AG04450 (cell line): ENCODE measurements at regions of chr6 and their contacts with region 1.

Region 1: DNA sequence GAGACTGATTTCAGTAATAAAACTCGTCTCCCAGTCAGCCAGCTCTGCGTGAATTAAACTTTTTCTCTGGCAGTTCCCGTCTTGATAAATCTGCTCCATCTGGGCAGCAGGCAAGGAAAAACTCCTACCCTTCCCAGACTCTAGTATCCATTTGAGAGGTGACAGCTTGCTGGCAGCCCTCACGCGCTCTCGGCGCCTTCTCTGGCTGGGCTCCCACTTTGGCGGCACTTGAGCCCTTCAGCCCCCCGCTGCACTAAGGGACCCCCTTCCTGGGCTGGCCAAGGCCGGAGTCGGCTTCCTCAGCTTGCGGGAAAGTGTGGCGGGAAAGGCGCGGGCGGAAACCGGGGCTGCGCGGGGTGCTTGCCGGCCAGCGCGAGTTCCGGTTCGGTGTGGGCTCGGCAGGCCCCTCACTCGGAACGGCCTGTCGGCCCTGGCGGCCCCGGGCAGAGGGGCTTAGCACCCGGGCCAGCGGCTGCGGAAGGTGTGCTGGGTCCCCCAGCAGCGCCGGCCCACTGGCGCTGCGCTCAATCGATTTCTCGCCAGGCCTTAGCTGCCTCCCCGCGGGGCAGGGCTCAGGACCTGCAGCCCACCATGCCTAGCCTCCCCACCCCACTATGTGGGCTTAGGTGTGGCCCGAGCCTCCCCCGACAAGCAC is 21.8 kb upstream of the GMPR start:
- DNase-seq: no peak
- H3K4me3 ChIP-seq: no peak overlapping the region
- H3K27ac ChIP-seq: no peak overlapping the region
- H3K27me3 ChIP-seq: no peaks in the 10 kb centered on the region
- CTCF ChIP-seq: no peak

Region 2: GRCh38 chr6:16236631-16237199 is 20.1 kb after region 1 on chr6:
- CTCF ChIA-PET with region 1: interaction called, 3 read pairs
- POLR2A ChIA-PET with region 1: interaction called, 10 read pairs
- DNase-seq: peak; percentile 21
- H3K4me3 ChIP-seq: peak overlapping the region; percentile 23
- H3K27ac ChIP-seq: no peak overlapping the region
- H3K27me3 ChIP-seq: no peaks in the 10 kb centered on the region
- CTCF ChIP-seq: no peak